Activated CD4-positive, alpha-beta memory T cell treated with anti-CD3 and anti-CD28 coated beads for 36 hours (primary cell): ENCODE measurements at regions of chr7 and their contacts with region 1.

Region 1: GRCh38 chr7:35729061-35729783 is 34.3 kb upstream of the HERPUD2 start:
- DNase-seq: peak; percentile 68
- H3K4me3 Mint-ChIP-seq: no peak overlapping the region
- H3K27ac Mint-ChIP-seq: peak overlapping the region; percentile 15
- H3K4me1 Mint-ChIP-seq: peaks cover 61% of the 10 kb centered on the region
- H3K27me3 Mint-ChIP-seq: peaks cover 3% of the 10 kb centered on the region

Region 2: DNA sequence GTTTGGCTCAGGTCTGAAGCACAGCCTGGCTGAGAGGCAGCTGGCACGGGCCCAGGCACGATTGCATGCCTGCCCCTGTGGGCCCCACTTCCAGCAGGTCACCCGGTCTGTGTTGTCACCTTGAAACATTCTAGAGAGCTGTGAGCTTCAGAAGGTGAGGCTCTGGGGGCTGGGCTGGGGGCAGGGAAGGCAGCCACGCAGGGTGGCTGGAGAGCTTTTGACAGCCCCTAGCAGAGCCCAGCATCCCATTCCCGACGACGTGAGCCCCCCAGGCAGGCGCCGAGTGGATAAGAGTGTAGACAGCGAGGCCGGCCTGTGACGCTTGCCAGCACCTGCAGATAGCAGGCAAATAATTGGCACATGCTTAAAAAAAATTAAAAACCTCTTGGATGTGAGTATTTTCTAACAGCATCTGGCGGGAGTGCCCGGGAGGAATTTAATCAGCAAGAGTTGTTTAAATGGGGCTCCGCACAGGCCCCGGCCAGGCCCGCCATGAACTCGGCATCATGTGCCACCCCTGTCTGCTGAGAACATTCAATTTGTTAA is 263.4 kb before region 1 on chr7:
- CTCF ChIA-PET with region 1: no interaction called
- POLR2A ChIA-PET with region 1: no interaction called
- intact Hi-C with region 1: no loop called
- DNase-seq: no peak
- H3K4me3 Mint-ChIP-seq: no peak overlapping the region
- H3K27ac Mint-ChIP-seq: no peak overlapping the region
- H3K4me1 Mint-ChIP-seq: no peaks in the 10 kb centered on the region
- H3K27me3 Mint-ChIP-seq: peaks cover 16% of the 10 kb centered on the region

Region 3: DNA sequence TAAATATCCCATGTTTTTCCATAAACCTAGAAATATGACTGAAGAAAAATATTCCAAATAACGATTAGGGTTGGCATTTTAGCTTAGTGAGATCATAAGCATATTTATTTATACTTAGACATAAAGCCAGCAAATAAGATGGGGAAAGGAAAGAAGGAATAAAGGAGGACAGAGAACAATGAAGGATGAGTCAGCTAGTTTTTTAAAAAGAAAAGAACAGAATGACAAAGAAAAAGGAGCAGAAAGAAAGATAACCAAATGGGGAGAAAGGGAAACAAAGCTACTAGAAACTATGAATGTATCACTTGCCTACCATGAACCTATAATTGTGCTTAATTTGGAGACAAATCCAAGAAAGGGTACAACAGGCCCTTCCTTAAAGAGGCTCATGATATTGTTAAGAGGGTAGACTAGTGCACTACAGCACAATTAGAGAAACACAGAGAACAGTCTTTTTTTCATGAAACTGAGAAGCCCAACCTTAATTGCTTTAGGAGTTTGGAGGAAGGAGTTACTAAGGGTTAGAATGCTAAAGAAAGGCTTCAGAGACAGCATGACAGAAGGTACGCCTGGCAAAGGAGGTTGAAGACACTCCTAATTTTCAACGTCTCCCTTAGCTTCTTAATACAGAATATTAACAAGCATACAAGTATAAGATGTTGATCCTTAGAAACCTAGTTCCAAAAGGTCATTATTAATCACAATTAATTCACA is 58.2 kb before region 1 on chr7:
- CTCF ChIA-PET with region 1: no interaction called
- POLR2A ChIA-PET with region 1: no interaction called
- intact Hi-C with region 1: no loop called
- DNase-seq: no peak
- H3K4me3 Mint-ChIP-seq: no peak overlapping the region
- H3K27ac Mint-ChIP-seq: no peak overlapping the region
- H3K4me1 Mint-ChIP-seq: peaks cover 28% of the 10 kb centered on the region
- H3K27me3 Mint-ChIP-seq: no peaks in the 10 kb centered on the region

Region 4: DNA sequence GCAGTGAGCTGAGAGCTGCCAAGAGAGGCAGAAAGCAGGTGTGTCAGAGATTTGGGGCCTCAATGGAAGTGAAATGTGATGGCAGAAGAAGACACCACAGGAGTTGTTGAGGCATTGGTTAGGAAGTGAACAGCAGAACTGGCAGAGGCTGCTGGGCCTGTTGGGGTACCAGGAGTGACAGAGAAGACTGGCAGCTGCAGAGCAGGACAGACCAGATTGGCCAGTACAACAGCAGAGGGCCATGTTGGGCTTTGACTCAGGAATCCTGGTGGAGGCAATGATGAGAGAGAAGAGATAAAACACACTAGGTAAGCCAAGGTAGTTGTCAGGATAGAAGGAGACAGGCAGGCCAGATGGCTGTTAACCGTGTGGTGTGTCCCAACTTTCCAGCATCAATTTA is 14.4 kb before region 1 on chr7:
- CTCF ChIA-PET with region 1: interaction called, 10 read pairs
- POLR2A ChIA-PET with region 1: no interaction called
- intact Hi-C with region 1: no loop called
- DNase-seq: no peak
- H3K4me3 Mint-ChIP-seq: no peak overlapping the region
- H3K27ac Mint-ChIP-seq: no peak overlapping the region
- H3K4me1 Mint-ChIP-seq: peaks cover 5% of the 10 kb centered on the region
- H3K27me3 Mint-ChIP-seq: no peaks in the 10 kb centered on the region

Region 5: GRCh38 chr7:36280840-36281812 is 551.9 kb after region 1 on chr7:
- CTCF ChIA-PET with region 1: no interaction called
- POLR2A ChIA-PET with region 1: no interaction called
- intact Hi-C with region 1: loop called (anchors 10 kb)
- DNase-seq: peak; percentile 53
- H3K4me3 Mint-ChIP-seq: no peak overlapping the region
- H3K27ac Mint-ChIP-seq: no peak overlapping the region
- H3K4me1 Mint-ChIP-seq: peaks cover 38% of the 10 kb centered on the region
- H3K27me3 Mint-ChIP-seq: no peaks in the 10 kb centered on the region